ENCODE measurements at regions of chr18 and their contacts with region 1.

Region 1: GRCh38 chr18:62566199-62566598 is 43.4 kb downstream of the ZCCHC2 start:
- DNase-seq: peak; percentile 29
- ATAC-seq: peak; percentile 61
- H3K4me3 Mint-ChIP-seq: no peak overlapping the region
- H3K27ac Mint-ChIP-seq: no peak overlapping the region
- H3K4me1 Mint-ChIP-seq: no peaks in the 10 kb centered on the region
- H3K27me3 Mint-ChIP-seq: no peaks in the 10 kb centered on the region
- CTCF ChIP-seq: no peak

Region 2: GRCh38 chr18:62458346-62458745 is 107.9 kb before region 1 on chr18:
- CTCF ChIA-PET with region 1: interaction called, 12 read pairs
- POLR2A ChIA-PET with region 1: no interaction called
- DNase-seq: no peak
- ATAC-seq: peak; percentile 51; the same call in 1 of the 2 replicates
- H3K4me3 Mint-ChIP-seq: no peak overlapping the region
- H3K27ac Mint-ChIP-seq: no peak overlapping the region
- H3K4me1 Mint-ChIP-seq: peaks cover 15% of the 10 kb centered on the region
- H3K27me3 Mint-ChIP-seq: no peaks in the 10 kb centered on the region
- CTCF ChIP-seq: no peak